ENCODE measurements at regions of chr16 and their contacts with region 1.

Region 1: GRCh38 chr16:67935402-67936123 is 1.1 kb downstream of the PSMB10 start:
- DNase-seq: peak; percentile 92
- H3K4me3 Mint-ChIP-seq: peak overlapping the region; percentile 100
- H3K27ac Mint-ChIP-seq: peak overlapping the region; percentile 90
- H3K4me1 Mint-ChIP-seq: peaks cover 26% of the 10 kb centered on the region
- H3K27me3 Mint-ChIP-seq: no peaks in the 10 kb centered on the region

Region 2: DNA sequence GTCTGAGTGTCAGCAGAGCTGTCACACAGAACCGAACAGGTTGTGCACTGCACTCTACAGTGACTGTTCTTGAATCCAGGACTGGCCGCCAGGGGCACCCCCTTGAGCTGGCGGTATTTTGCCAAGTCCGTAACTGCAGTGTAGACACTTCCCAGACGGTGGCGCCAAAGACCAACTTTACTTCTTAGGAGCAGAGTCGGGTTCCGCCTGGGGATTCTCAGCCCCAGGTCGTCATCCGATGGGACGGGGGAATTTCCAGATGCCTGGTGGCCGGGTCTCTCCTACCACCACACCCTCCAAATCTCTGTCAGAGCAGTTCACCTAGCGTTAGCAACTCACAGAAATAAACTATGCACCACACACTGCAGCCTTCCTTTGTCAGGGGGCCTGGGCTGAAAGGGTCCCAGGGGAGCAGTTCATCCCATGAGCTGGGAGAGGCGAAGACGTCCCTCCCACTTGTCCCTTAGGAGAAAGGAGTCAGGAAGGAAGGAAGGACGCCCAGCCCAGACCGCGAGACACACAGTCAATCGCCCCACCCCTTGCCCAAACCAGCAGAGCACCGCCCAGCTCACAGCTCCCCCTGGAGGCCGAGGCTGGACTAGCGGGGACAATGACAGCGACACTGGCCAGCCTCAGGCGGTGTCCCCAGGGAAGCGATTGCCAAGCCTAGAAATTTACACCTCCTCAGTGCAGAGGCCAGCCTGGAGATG is 414.3 kb before region 1 on chr16:
- intact Hi-C with region 1: loop called (anchors 10 kb)
- DNase-seq: peak; percentile 94
- H3K4me3 Mint-ChIP-seq: peak overlapping the region; percentile 85
- H3K27ac Mint-ChIP-seq: peak overlapping the region; percentile 98
- H3K4me1 Mint-ChIP-seq: peaks cover 18% of the 10 kb centered on the region
- H3K27me3 Mint-ChIP-seq: peaks cover 5% of the 10 kb centered on the region

Region 3: GRCh38 chr16:67841764-67842508 is 93.6 kb before region 1 on chr16 and contains the start of gene THAP11:
- intact Hi-C with region 1: loop called (anchors 1 kb)
- DNase-seq: peak; percentile 92
- H3K4me3 Mint-ChIP-seq: peak within 1 kb of the TSS; percentile 89
- H3K27ac Mint-ChIP-seq: peak within 1 kb of the TSS; percentile 94
- H3K4me1 Mint-ChIP-seq: peaks cover 29% of the 10 kb centered on the region
- H3K27me3 Mint-ChIP-seq: no peaks in the 10 kb centered on the region
- total RNA-seq, gene THAP11: 43.0 and 45.1 TPM in 2 replicates

Region 4: DNA sequence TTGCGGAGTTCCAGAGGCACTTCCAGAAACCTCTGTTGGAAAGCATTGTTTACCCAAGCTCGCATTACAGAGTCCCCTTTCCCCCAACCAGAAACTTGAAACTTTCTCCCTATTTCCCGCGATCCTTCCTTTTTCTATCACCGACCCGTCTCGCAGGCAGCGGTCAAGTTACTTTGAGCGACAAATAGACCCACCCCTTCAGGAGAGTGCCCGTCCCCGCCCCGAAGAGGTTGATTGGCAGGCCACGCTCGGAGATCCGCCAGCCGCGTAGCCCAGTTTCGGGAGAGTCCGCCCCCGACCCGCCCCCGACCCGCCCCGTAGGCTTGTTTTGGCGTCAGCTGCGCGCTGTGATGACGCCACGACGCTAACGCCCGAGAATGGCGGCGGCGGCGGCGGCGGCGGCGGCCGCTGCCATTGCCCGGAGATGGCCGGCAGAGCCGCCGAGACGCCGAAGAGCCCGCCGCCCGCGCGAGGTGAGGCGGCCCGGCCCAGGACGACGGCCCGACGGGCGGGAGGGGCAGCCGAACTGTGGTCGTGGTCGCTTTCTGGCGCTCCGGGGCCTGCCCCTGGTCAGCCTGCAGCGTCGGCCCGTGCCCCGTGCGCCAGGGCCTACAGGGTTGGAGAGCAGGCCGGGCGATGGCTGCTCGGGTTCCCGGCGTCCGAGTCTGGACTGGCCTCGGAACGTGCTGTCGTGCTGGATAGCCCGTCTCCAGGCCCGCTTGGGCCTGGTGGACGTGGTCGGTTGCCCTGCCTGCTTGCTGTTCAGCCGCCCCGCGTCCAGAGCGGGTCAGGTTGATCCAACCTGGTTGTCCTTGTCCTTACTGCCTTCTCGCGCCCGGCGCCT is 42.4 kb before region 1 on chr16 and contains the start of gene PSKH1:
- intact Hi-C with region 1: loop called (anchors 2 kb)
- DNase-seq: peak; percentile 90
- H3K4me3 Mint-ChIP-seq: peak within 1 kb of the TSS; percentile 97
- H3K27ac Mint-ChIP-seq: peak within 1 kb of the TSS; percentile 91
- H3K4me1 Mint-ChIP-seq: peaks cover 19% of the 10 kb centered on the region
- H3K27me3 Mint-ChIP-seq: no peaks in the 10 kb centered on the region
- total RNA-seq, gene PSKH1: 15.5 and 16.5 TPM in 2 replicates

Region 5: DNA sequence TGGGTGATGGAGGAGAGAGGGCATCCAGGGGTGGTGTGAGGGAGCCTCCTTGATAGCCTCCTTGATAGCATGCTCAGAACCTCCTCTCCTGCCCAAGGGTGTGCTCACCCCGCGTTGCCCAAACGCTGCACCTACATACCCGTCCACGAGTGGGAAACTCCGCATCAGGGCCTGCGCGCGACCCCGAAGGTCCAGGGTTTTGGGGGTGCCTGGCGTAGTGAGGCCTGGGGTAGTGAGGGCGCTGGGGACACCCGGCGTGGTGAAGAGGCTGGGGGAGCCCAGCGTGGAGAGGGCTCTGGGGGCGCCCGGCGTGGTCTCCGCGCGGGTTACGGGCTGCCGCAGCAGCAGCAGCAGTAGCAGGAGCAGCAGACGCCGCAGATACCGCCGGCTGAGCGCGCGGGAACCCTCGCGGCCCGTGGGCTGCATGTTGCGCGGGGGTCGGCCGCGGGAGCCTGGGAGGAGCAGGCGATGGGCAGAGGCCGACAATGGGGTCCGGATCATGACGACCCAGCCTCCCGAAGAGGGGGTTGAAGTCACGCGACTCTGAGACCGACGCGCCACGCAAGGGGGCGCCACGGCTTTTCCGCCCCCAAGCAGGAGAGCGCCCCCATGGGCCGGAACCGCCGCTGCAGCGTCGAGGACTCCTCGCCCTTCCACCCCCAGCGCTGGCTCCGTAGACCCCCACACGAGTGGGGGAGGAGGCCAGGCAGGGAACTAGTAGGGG is 44.6 kb after region 1 on chr16 and contains the start of gene DPEP3:
- intact Hi-C with region 1: loop called (anchors 5 kb)
- DNase-seq: no peak
- H3K4me3 Mint-ChIP-seq: no peak within 1 kb of the TSS
- H3K27ac Mint-ChIP-seq: no peak within 1 kb of the TSS
- H3K4me1 Mint-ChIP-seq: peaks cover 15% of the 10 kb centered on the region
- H3K27me3 Mint-ChIP-seq: no peaks in the 10 kb centered on the region
- total RNA-seq, gene DPEP3: not detected in 2 replicates

Region 6: GRCh38 chr16:68040507-68041288 is 105.1 kb after region 1 on chr16:
- intact Hi-C with region 1: loop called (anchors 5 kb)
- DNase-seq: peak; percentile 82
- H3K4me3 Mint-ChIP-seq: no peak overlapping the region
- H3K27ac Mint-ChIP-seq: peak overlapping the region; percentile 39
- H3K4me1 Mint-ChIP-seq: peaks cover 11% of the 10 kb centered on the region
- H3K27me3 Mint-ChIP-seq: no peaks in the 10 kb centered on the region